Dendritic cell treated with granulocyte-macrophage colony-stimulating factor and Interleukin-4, amounts not matched to agents 40 ng/mL and 50 ng/mL, for 4 days (primary cell): ENCODE measurements at regions of chr17 and their contacts with region 1.

Region 1: GRCh38 chr17:21457051-21458026 is 81.2 kb downstream of the KCNJ12 start:
- H3K4me3 Mint-ChIP-seq: no peak overlapping the region
- H3K27ac Mint-ChIP-seq: no peak overlapping the region
- H3K4me1 Mint-ChIP-seq: peaks cover 15% of the 10 kb centered on the region
- H3K27me3 Mint-ChIP-seq: peaks cover 44% of the 10 kb centered on the region

Region 2: GRCh38 chr17:21132428-21132827 is 324.9 kb before region 1 on chr17:
- intact Hi-C with region 1: loop called (anchors 5 kb)
- H3K4me3 Mint-ChIP-seq: no peak overlapping the region
- H3K27ac Mint-ChIP-seq: no peak overlapping the region
- H3K4me1 Mint-ChIP-seq: peaks cover 36% of the 10 kb centered on the region
- H3K27me3 Mint-ChIP-seq: no peaks in the 10 kb centered on the region

Region 3: GRCh38 chr17:21284319-21285163 is 172.8 kb before region 1 on chr17 and contains the start of gene MAP2K3:
- intact Hi-C with region 1: loop called (anchors 2 kb)
- H3K4me3 Mint-ChIP-seq: peak within 1 kb of the TSS; percentile 91
- H3K27ac Mint-ChIP-seq: peak within 1 kb of the TSS; percentile 98
- H3K4me1 Mint-ChIP-seq: peaks cover 83% of the 10 kb centered on the region
- H3K27me3 Mint-ChIP-seq: peaks cover 2% of the 10 kb centered on the region

Region 4: GRCh38 chr17:21318439-21318838 is 138.9 kb before region 1 on chr17:
- intact Hi-C with region 1: loop called (anchors 5 kb)
- H3K4me3 Mint-ChIP-seq: no peak overlapping the region
- H3K27ac Mint-ChIP-seq: no peak overlapping the region
- H3K4me1 Mint-ChIP-seq: peaks cover 16% of the 10 kb centered on the region
- H3K27me3 Mint-ChIP-seq: peaks cover 9% of the 10 kb centered on the region

Region 5: GRCh38 chr17:21467739-21468490 is 10.6 kb after region 1 on chr17:
- intact Hi-C with region 1: no loop called
- H3K4me3 Mint-ChIP-seq: no peak overlapping the region
- H3K27ac Mint-ChIP-seq: no peak overlapping the region
- H3K4me1 Mint-ChIP-seq: peaks cover 11% of the 10 kb centered on the region
- H3K27me3 Mint-ChIP-seq: peaks cover 29% of the 10 kb centered on the region

Region 6: GRCh38 chr17:21511363-21512198 is 54.2 kb after region 1 on chr17:
- intact Hi-C with region 1: loop called (anchors 1 kb)
- H3K4me3 Mint-ChIP-seq: peak overlapping the region; percentile 77
- H3K27ac Mint-ChIP-seq: peak overlapping the region; percentile 65
- H3K4me1 Mint-ChIP-seq: peaks cover 31% of the 10 kb centered on the region
- H3K27me3 Mint-ChIP-seq: peaks cover 46% of the 10 kb centered on the region